Left ventricle myocardium superior (tissue), 1 donor: ENCODE measurements at regions of chr13 and their contacts with region 1.

Region 1: GRCh38 chr13:21297914-21298831 is 121.7 kb downstream of the MRPL57 start:
- DNase-seq: peak; percentile 89
- ATAC-seq: peak; percentile 100

Region 2: GRCh38 chr13:20824762-20825476 is 473.3 kb before region 1 on chr13:
- intact Hi-C with region 1: no loop called
- DNase-seq: no peak
- ATAC-seq: peak; percentile 75

Region 3: DNA sequence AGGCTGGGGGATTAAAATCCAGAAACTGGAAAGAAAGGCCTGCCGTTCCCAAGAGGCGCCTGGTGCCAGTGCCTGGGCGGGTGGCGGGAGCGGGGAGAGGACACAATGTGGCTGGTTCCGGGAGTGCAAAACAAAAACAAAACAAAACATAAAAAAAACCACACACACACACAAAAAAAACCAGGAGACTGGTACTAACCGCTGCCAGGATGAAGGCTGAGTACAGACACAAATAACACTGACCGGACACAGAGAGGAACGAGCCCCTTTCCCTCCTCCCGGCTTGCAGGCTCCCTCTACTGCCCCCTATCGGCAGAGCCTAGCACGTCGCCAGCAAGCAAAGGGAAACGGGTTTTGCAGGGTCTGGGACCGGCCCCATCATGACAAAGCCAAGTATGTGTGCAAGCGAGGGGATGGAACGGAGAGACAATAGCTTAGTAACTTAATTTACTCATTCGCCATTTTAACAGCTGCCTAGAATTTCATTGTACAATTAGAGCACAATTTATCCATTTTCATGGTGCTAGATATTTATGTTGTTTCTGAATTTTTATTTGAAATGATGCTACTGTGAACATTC is 178.8 kb after region 1 on chr13:
- intact Hi-C with region 1: loop called (anchors 5 kb)
- DNase-seq: peak; percentile 82
- ATAC-seq: peak; percentile 75